ENCODE measurements at regions of chr2 and their contacts with region 1.

Region 1: DNA sequence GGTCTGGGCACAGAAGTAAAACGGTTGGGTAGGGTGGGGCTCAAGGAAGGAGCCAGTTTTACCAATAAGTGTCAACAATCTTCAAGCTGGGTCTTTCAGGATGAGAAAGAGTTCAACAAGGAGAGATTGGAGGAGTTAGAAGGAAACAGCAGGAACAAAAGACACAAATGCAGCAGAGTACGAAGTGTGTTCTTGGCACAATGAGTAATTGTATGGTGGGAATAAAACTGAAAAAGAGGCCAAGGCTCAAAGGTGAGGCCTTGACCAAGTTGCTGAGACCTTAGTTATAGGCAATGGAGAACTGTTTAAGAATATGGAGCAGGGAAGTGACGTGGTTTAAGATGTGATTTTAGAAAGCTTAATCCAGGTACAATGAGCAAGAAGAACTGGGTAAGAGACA is 230.3 kb downstream of the PDE11A start:
- DNase-seq: no peak
- ATAC-seq: no peak
- H3K4me3 ChIP-seq: no peak overlapping the region
- H3K27ac ChIP-seq: no peak overlapping the region
- H3K4me1 ChIP-seq: no peaks in the 10 kb centered on the region
- H3K27me3 ChIP-seq: no peaks in the 10 kb centered on the region

Region 2: DNA sequence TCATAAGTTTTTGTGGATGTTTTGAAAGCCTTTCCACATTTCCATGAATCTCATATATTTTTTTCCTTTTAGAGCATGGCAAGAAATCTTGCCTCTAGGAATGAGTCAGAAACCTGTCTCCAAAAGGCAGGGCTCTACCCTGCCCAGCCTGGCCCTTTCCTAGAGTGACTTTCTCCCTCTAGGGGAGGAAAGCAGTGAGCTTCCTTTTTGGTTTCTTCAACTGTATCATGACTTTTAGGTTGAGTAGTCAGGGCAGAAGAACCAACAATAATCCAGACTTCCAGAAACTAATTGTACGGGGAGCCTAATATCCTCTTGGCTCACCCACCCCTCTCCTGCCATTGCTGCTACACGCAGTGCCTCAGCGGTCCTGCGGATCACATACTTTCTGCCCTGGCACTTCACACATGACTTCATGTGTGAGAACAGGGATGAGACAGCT is 149.4 kb before region 1 on chr2:
- intact Hi-C with region 1: loop called in 1 of 2 experiments (anchors 10 kb)
- DNase-seq: no peak
- ATAC-seq: no peak
- H3K4me3 ChIP-seq: no peak overlapping the region
- H3K27ac ChIP-seq: no peak overlapping the region
- H3K4me1 ChIP-seq: no peaks in the 10 kb centered on the region
- H3K27me3 ChIP-seq: no peaks in the 10 kb centered on the region